ENCODE measurements at regions of chr20 and their contacts with region 1.

Region 1: DNA sequence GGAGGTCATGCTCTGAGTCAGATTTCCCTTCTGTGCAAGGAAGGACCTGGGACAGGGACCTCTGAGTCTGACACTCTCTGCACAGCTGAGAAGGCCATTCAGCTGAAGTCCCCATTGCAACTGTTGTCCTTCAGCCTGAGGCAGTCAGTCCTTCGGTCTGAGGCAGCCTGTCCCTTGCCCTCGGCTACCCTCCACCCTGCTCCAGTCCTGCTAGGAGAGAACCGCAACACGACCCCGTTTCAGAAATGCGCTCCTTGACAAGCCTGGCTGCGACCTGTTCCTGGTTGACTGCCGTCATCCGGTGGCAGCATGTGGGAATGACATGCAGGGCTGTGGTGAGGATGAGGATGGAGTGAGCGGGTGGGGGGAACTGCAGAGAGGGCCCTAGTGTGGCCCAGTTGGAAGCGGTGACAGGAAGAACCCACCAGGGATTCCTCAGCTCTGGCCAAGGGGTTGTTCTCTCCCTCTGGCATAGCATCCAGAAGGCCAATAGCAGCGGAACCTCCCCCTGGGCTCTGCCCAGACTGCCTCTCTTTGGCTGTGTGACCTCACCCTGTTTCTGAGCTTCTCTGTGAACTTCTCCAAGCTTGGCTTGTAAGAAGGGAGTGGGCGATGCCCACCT is 40.3 kb upstream of the ANGPT4 start:
- DNase-seq: peak; percentile 77 to 89
- ATAC-seq: peak; percentile 72 to 90
- H3K4me3 ChIP-seq: no peak overlapping the region
- H3K27ac ChIP-seq: no peak overlapping the region
- H3K4me1 ChIP-seq: no peaks in the 10 kb centered on the region
- CTCF ChIP-seq: peak; percentile 98
- EP300 ChIP-seq: no peak
- POLR2A ChIP-seq: no peak
- RAD21 ChIP-seq: peak; percentile 98 to 99

Region 2: GRCh38 chr20:787825-788224 is 168.6 kb before region 1 on chr20:
- CTCF ChIA-PET with region 1: interaction called, 12 read pairs
- POLR2A ChIA-PET with region 1: no interaction called
- DNase-seq: no peak
- ATAC-seq: no peak
- H3K4me3 ChIP-seq: no peak overlapping the region
- H3K27ac ChIP-seq: no peak overlapping the region
- H3K4me1 ChIP-seq: no peaks in the 10 kb centered on the region
- CTCF ChIP-seq: no peak
- EP300 ChIP-seq: no peak
- POLR2A ChIP-seq: no peak
- RAD21 ChIP-seq: no peak

Region 3: GRCh38 chr20:844473-845225 is 111.8 kb before region 1 on chr20:
- CTCF ChIA-PET with region 1: interaction called, 28 read pairs
- POLR2A ChIA-PET with region 1: no interaction called
- DNase-seq: peak; percentile 70 to 73
- ATAC-seq: peak; percentile 50 to 93; a peak in 4 of 6 replicates
- H3K4me3 ChIP-seq: no peak overlapping the region
- H3K27ac ChIP-seq: no peak overlapping the region
- H3K4me1 ChIP-seq: peaks cover 5% of the 10 kb centered on the region; the same call in 1 of the 3 replicates
- CTCF ChIP-seq: no peak
- EP300 ChIP-seq: no peak
- POLR2A ChIP-seq: no peak
- RAD21 ChIP-seq: no peak

Region 4: GRCh38 chr20:910870-911770 is 45.3 kb before region 1 on chr20:
- CTCF ChIA-PET with region 1: interaction called, 25 read pairs
- POLR2A ChIA-PET with region 1: no interaction called
- DNase-seq: no peak
- ATAC-seq: peak in 1 of 2 experiments; percentile 48; a peak in 3 of 6 replicates
- H3K4me3 ChIP-seq: no peak overlapping the region
- H3K27ac ChIP-seq: peak overlapping the region in 1 of 2 experiments; percentile 61; a peak in 3 of 6 replicates
- H3K4me1 ChIP-seq: peaks cover 15% of the 10 kb centered on the region
- CTCF ChIP-seq: no peak
- EP300 ChIP-seq: no peak
- POLR2A ChIP-seq: no peak
- RAD21 ChIP-seq: no peak

Region 5: DNA sequence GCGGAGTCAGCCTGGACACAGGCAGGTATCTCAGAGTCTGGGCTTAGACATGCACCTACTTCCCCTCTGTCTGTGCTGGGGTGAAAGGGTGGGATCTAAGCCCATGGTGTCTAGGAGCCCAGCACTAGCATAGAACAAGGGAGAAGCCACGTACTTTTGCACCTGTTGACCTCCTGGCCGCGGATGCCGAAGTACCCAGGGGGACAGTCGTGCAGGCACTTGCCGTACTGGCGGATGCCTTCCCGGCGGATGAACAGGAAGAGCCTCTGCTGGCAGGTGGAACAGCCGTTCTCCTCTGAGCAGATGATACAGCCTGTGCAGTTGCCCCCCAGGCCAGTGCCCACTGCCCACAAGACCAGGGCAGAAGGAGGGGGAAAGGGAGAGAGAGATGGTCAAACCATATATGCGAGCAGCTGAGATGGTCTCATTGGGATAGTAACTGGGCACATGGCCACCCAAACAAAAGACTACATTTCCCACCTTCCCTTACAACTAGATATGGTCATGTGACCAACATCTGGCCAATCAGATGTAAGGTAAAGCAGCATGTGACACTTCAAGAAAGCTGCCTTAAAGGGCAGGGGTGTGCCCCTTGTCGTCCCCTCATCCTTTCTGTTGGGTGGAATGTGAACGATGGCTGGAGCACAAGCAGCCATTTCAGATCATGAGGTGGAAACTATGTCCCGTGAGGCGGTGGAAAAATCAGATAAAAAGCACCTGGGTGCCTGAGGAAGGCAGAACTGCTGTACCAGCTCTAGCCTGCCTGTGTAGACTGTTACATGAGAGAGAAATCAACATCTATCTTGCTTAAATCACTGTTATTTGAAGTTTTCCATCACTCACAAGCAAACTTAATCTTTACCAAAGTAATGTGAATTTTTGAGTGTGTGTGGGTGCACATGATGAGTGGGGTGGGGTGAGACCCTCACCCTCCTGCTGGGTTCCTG is 11.6 kb after region 1 on chr20:
- CTCF ChIA-PET with region 1: interaction called, 127 read pairs
- POLR2A ChIA-PET with region 1: no interaction called
- DNase-seq: peak in 1 of 2 experiments; percentile 76
- ATAC-seq: peak in 1 of 2 experiments; percentile 55; a peak in 3 of 6 replicates
- H3K4me3 ChIP-seq: no peak overlapping the region
- H3K27ac ChIP-seq: no peak overlapping the region
- H3K4me1 ChIP-seq: no peaks in the 10 kb centered on the region
- CTCF ChIP-seq: no peak
- EP300 ChIP-seq: no peak
- POLR2A ChIP-seq: no peak
- RAD21 ChIP-seq: no peak

Region 6: GRCh38 chr20:1185790-1186334 is 229.4 kb after region 1 on chr20:
- CTCF ChIA-PET with region 1: interaction called, 18 read pairs
- POLR2A ChIA-PET with region 1: no interaction called
- DNase-seq: peak; percentile 78 to 81
- ATAC-seq: peak; percentile 72 to 87
- H3K4me3 ChIP-seq: peak overlapping the region; percentile 94
- H3K27ac ChIP-seq: peak overlapping the region; percentile 76 to 90
- H3K4me1 ChIP-seq: peaks cover 16% of the 10 kb centered on the region
- CTCF ChIP-seq: peak; percentile 79
- EP300 ChIP-seq: no peak
- POLR2A ChIP-seq: no peak
- RAD21 ChIP-seq: peak; percentile 64 to 83